Breast epithelium (tissue), 4 donors: ENCODE measurements at regions of chr19 and their contacts with region 1.

Region 1: GRCh38 chr19:39264306-39265290 is 3.6 kb upstream of the IFNL2 start:
- DNase-seq: no peak
- H3K4me3 ChIP-seq: peak overlapping the region in 1 of 3 donors; percentile 35
- H3K27ac ChIP-seq: no peak overlapping the region
- H3K4me1 ChIP-seq: no peaks in the 10 kb centered on the region
- H3K27me3 ChIP-seq: peaks cover 4 to 46% of the 10 kb centered on the region in 2 donors
- CTCF ChIP-seq: no peak
- POLR2A ChIP-seq: no peak

Region 2: GRCh38 chr19:39156326-39157230 is 108.0 kb before region 1 on chr19:
- intact Hi-C with region 1: no loop called
- DNase-seq: no peak
- H3K4me3 ChIP-seq: peak overlapping the region in 2 of 3 donors; percentile 14 to 59
- H3K27ac ChIP-seq: peak overlapping the region; percentile 84
- H3K4me1 ChIP-seq: peaks cover 45 to 63% of the 10 kb centered on the region in 2 donors
- H3K27me3 ChIP-seq: no peaks in the 10 kb centered on the region
- CTCF ChIP-seq: no peak
- POLR2A ChIP-seq: no peak

Region 3: DNA sequence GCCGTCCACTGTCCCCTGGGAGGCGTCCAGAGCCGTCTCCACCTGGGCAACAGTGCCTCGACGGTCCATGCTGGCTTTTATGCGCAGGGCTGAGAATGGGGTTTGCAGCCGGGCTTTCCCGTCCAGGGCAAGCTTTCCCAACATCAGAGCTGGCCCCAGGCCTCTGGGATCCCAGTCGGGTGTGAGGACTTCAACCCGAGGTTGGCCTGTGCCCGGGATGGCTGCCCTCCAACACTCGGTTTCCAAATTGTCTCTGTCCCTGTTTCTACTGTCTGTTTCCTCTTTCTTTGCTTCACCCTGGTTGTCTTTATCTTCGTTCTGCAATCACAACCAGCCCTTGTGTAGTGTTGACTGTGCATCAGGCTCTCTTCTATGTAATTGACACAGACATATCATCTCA is 15.8 kb before region 1 on chr19 and contains the start of gene IFNL4:
- intact Hi-C with region 1: loop called (anchors 1 kb)
- DNase-seq: no peak
- H3K4me3 ChIP-seq: peak within 1 kb of the TSS in 2 of 3 donors; percentile 37 to 58
- H3K27ac ChIP-seq: no peak within 1 kb of the TSS
- H3K4me1 ChIP-seq: no peaks in the 10 kb centered on the region
- H3K27me3 ChIP-seq: peaks cover 4 to 22% of the 10 kb centered on the region in 2 donors
- CTCF ChIP-seq: no peak
- POLR2A ChIP-seq: no peak
- total RNA-seq, gene IFNL4: not detected